Gastrocnemius medialis (tissue), 4 donors: ENCODE measurements at regions of chr17 and their contacts with region 1.

Region 1: GRCh38 chr17:58352014-58352842 is at the start of gene SUPT4H1:
- DNase-seq: peak; percentile 76 to 86
- ATAC-seq: peak; percentile 96 to 98
- H3K4me3 ChIP-seq: peak within 1 kb of the TSS; percentile 63 to 96 (median 92)
- H3K27ac ChIP-seq: peak within 1 kb of the TSS; percentile 83 to 96 (median 88)
- H3K4me1 ChIP-seq: peaks cover 15 to 19% of the 10 kb centered on the region in 2 donors
- H3K27me3 ChIP-seq: no peaks in the 10 kb centered on the region
- CTCF ChIP-seq: peak in 1 of 5 experiments; percentile 33
- POLR2A ChIP-seq: peak; percentile 73 to 75
- total RNA-seq, gene SUPT4H1: 39.6 to 49.0 (median 41.1) TPM

Region 2: GRCh38 chr17:58219001-58219788 is 133.0 kb before region 1 on chr17 and contains the start of gene MKS1:
- in situ Hi-C with region 1: no loop called
- intact Hi-C with region 1: loop called (anchors 5 kb)
- DNase-seq: peak; percentile 85 to 92
- ATAC-seq: peak; percentile 95 to 98
- H3K4me3 ChIP-seq: peak within 1 kb of the TSS; percentile 62 to 88 (median 78)
- H3K27ac ChIP-seq: peak within 1 kb of the TSS; percentile 75 to 86 (median 79)
- H3K4me1 ChIP-seq: peaks cover 7 to 9% of the 10 kb centered on the region in 2 donors
- H3K27me3 ChIP-seq: no peaks in the 10 kb centered on the region
- CTCF ChIP-seq: peak; percentile 59 to 83 (median 66)
- POLR2A ChIP-seq: peak in 1 of 2 donors; percentile 20
- total RNA-seq, gene MKS1: 2.2 to 6.7 (median 2.8) TPM

Region 3: GRCh38 chr17:58324409-58325288 is 27.6 kb before region 1 on chr17:
- in situ Hi-C with region 1: no loop called
- intact Hi-C with region 1: no loop called
- DNase-seq: no peak
- ATAC-seq: peak; percentile 35 to 70
- H3K4me3 ChIP-seq: peak overlapping the region; percentile 60 to 77 (median 70)
- H3K27ac ChIP-seq: peak overlapping the region in 2 of 4 donors; percentile 44 to 58
- H3K4me1 ChIP-seq: peaks cover 0 to 6% of the 10 kb centered on the region in 2 donors
- H3K27me3 ChIP-seq: peaks cover 2 to 16% (median 7%) of the 10 kb centered on the region in 3 donors
- CTCF ChIP-seq: no peak
- POLR2A ChIP-seq: no peak

Region 4: DNA sequence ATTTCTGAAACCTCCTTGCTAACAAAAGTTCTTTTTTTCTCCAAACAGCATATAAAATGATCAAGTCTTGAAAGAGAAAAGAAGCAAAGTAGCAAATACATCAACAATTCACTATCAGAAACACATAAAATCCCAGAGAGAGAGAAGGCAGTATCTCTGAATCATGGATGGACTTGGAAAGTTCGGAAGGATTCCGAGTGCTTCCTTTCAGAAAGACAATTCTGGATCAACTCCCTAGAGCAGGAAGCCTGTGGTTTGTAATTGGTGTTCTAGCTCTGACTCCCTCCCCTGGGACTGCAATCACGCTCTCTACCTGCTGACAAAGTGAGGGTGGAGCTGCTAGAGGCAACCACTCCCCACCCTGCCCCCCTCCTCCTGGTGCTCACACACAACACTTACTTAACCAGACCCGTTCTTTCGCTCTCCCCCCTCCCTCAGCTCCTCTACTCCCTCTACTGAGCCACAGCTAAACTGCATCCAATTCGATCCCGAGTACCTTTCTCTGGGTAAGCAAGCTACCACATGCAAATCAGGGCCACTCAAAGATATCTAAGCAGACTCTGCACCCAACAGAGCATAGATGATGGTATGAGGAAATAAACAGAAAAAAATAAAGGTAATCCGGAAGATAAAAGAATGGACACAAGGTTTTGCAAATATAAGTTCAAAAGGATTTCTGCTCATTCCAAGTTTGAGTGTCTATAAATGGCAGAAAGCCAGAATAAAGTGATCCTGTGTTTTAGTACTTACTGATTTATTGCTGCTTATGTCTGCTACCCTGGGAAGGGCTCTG is 65.3 kb after region 1 on chr17 and contains the start of gene RNF43:
- in situ Hi-C with region 1: no loop called
- intact Hi-C with region 1: loop called (anchors 1 kb)
- DNase-seq: peak; percentile 56 to 84
- ATAC-seq: peak; percentile 96 to 99
- H3K4me3 ChIP-seq: peak within 1 kb of the TSS; percentile 30 to 54 (median 34)
- H3K27ac ChIP-seq: peak within 1 kb of the TSS in 2 of 4 donors; percentile 6 to 29
- H3K4me1 ChIP-seq: peaks cover 0 to 10% of the 10 kb centered on the region in 2 donors
- H3K27me3 ChIP-seq: no peaks in the 10 kb centered on the region
- CTCF ChIP-seq: peak; percentile 37 to 69 (median 60)
- POLR2A ChIP-seq: no peak
- total RNA-seq, gene RNF43: 0.20 TPM in 1 of 4 donors, not detected in the others

Region 5: GRCh38 chr17:58463821-58464220 is 111.6 kb after region 1 on chr17:
- in situ Hi-C with region 1: no loop called
- intact Hi-C with region 1: no loop called
- DNase-seq: no peak
- ATAC-seq: no peak
- H3K4me3 ChIP-seq: no peak overlapping the region
- H3K27ac ChIP-seq: no peak overlapping the region
- H3K4me1 ChIP-seq: no peaks in the 10 kb centered on the region
- H3K27me3 ChIP-seq: no peaks in the 10 kb centered on the region
- CTCF ChIP-seq: no peak
- POLR2A ChIP-seq: no peak

Region 6: DNA sequence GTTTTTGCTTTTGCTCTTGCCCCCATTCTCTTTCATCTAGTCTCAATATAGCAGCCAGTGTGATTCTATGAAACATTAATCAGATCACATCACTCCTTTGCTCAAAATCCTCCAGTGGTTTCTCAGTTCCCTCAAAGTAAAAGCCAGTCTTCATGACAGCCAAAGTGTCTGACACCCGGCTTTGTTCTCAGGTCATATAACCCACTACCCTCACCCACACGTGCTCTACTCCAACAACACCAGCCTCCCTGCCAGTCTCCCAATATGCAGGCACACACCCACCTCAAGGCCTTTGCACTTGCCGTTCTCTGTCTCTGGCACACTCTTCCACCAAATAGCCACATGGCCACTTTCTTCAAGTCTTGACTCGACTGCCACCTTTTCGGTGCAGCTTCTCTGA is 157.8 kb after region 1 on chr17:
- in situ Hi-C with region 1: no loop called
- intact Hi-C with region 1: no loop called
- DNase-seq: no peak
- ATAC-seq: no peak
- H3K4me3 ChIP-seq: no peak overlapping the region
- H3K27ac ChIP-seq: no peak overlapping the region
- H3K4me1 ChIP-seq: peaks cover 12 to 15% of the 10 kb centered on the region in 2 donors
- H3K27me3 ChIP-seq: no peaks in the 10 kb centered on the region
- CTCF ChIP-seq: no peak
- POLR2A ChIP-seq: no peak

Region 7: GRCh38 chr17:58658804-58659713 is 306.8 kb after region 1 on chr17:
- in situ Hi-C with region 1: no loop called
- intact Hi-C with region 1: loop called (anchors 1 kb)
- DNase-seq: peak; percentile 41 to 79
- ATAC-seq: peak; percentile 96 to 99
- H3K4me3 ChIP-seq: peak overlapping the region; percentile 55 to 66 (median 61)
- H3K27ac ChIP-seq: peak overlapping the region; percentile 65 to 80 (median 79)
- H3K4me1 ChIP-seq: no peaks in the 10 kb centered on the region
- H3K27me3 ChIP-seq: no peaks in the 10 kb centered on the region
- CTCF ChIP-seq: peak in 1 of 5 experiments; percentile 41
- POLR2A ChIP-seq: peak; percentile 94 to 98

Region 8: DNA sequence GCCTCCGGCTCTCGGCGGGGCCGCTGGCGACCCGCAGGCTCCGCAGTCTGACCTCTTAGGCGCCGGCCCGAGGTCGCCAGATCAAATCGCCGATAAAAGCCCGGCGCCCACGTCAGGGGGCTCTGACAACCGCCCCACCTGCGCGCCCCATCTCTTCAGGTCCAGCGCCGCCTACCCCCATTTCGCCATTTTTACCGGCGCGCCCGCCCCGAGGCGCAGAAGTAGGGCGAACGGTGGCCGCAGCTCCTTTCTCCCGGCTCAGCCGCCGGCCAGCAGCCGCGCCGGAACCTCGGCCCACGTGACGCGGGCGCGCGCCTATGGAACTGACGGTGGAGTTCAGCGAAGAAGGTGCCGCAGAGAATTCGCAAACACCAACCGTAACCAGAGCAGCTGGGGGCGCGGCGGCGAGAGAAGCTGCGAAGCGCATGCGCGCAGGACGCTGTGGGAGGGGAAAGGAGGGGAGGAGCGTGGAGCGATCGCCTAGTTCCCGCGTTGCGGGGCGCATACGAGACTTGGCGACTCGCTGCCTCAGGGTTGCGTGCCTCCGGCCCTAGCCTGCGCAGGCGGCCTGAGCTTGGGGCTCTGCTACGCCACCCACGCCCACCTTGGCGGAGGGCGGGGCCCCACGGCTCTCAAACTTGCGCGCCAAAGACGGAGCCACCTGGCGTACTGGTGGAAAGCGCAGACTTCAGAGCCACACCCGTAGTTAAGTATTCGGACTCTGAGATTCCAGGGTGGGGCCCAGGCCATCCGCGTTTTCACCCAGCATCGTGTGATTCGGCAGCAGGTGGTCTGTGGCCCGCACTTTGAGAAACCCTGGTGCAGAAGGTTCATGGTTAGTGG is 754.5 kb after region 1 on chr17 and contains the start of gene TRIM37:
- in situ Hi-C with region 1: no loop called
- intact Hi-C with region 1: loop called (anchors 5 kb)
- DNase-seq: peak; percentile 96 to 97
- ATAC-seq: peak; percentile 98 to 99
- H3K4me3 ChIP-seq: peak within 1 kb of the TSS; percentile 67 to 99 (median 91)
- H3K27ac ChIP-seq: peak within 1 kb of the TSS; percentile 84 to 99 (median 92)
- H3K4me1 ChIP-seq: peaks cover 7 to 25% of the 10 kb centered on the region in 2 donors
- H3K27me3 ChIP-seq: no peaks in the 10 kb centered on the region
- CTCF ChIP-seq: peak in 2 of 5 experiments; percentile 6 to 27
- POLR2A ChIP-seq: peak; percentile 88 to 89
- total RNA-seq, gene TRIM37: 16.1 to 17.5 (median 16.3) TPM